ENCODE measurements at regions of chr2 and their contacts with region 1.

Region 1: GRCh38 chr2:235836491-235836926 is 331.7 kb downstream of the GBX2 start:
- DNase-seq: peak in 1 of 2 experiments; percentile 13
- H3K4me3 ChIP-seq: no peak overlapping the region
- H3K4me3 Mint-ChIP-seq: no peak overlapping the region
- H3K27ac Mint-ChIP-seq: no peak overlapping the region
- H3K4me1 ChIP-seq: no peaks in the 10 kb centered on the region
- H3K4me1 Mint-ChIP-seq: no peaks in the 10 kb centered on the region
- H3K27me3 ChIP-seq: no peaks in the 10 kb centered on the region
- H3K27me3 Mint-ChIP-seq: no peaks in the 10 kb centered on the region
- CTCF ChIP-seq: no peak

Region 2: GRCh38 chr2:235149240-235149659 is 687.3 kb before region 1 on chr2:
- CTCF ChIA-PET with region 1: no interaction called
- POLR2A ChIA-PET with region 1: no interaction called
- intact Hi-C with region 1: loop called (anchors 10 kb)
- DNase-seq: no peak
- H3K4me3 ChIP-seq: no peak overlapping the region
- H3K4me3 Mint-ChIP-seq: no peak overlapping the region
- H3K27ac Mint-ChIP-seq: no peak overlapping the region
- H3K4me1 ChIP-seq: no peaks in the 10 kb centered on the region
- H3K4me1 Mint-ChIP-seq: peaks cover 5% of the 10 kb centered on the region
- H3K27me3 ChIP-seq: no peaks in the 10 kb centered on the region
- H3K27me3 Mint-ChIP-seq: peaks cover 5% of the 10 kb centered on the region
- CTCF ChIP-seq: no peak

Region 3: DNA sequence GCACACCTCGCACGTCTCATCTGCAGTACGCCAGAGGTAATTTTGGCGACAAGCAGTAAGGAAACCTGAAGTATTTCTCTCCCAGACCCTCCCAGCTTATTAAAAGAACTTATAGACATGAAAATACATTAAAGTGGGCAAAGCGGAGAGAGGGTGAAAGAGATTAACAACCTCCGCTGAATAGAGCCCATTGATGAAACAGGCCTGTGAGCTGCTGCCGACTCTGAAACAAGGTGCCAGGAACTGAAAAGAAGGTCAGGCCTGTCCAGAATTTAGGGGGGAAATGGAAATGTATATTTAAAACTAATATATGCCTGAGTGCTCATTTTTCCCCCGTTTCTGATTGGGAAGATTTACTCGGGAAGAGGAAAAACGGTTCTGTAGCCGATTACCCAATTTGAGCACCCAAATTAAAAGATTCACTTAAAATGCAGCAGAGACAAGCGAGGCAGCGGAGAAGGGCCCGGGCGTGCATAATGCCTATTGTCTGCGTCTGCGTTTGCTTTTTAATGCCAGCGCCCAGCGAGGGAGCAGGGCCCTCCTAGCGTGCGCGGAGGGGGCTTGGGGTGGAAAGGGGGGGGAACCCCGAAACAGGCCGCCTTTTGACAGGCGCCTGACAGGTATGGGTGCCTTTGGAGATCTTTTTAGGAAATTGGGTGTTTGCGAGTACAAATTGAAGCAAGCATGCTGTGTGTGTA is 15.5 kb after region 1 on chr2:
- CTCF ChIA-PET with region 1: no interaction called
- POLR2A ChIA-PET with region 1: no interaction called
- intact Hi-C with region 1: no loop called
- DNase-seq: no peak
- H3K4me3 ChIP-seq: no peak overlapping the region
- H3K4me3 Mint-ChIP-seq: no peak overlapping the region
- H3K27ac Mint-ChIP-seq: no peak overlapping the region
- H3K4me1 ChIP-seq: no peaks in the 10 kb centered on the region
- H3K4me1 Mint-ChIP-seq: no peaks in the 10 kb centered on the region
- H3K27me3 ChIP-seq: no peaks in the 10 kb centered on the region
- H3K27me3 Mint-ChIP-seq: no peaks in the 10 kb centered on the region
- CTCF ChIP-seq: no peak